CD8-positive, alpha-beta memory T cell (primary cell): ENCODE measurements at regions of chr11 and their contacts with region 1.

Region 1: DNA sequence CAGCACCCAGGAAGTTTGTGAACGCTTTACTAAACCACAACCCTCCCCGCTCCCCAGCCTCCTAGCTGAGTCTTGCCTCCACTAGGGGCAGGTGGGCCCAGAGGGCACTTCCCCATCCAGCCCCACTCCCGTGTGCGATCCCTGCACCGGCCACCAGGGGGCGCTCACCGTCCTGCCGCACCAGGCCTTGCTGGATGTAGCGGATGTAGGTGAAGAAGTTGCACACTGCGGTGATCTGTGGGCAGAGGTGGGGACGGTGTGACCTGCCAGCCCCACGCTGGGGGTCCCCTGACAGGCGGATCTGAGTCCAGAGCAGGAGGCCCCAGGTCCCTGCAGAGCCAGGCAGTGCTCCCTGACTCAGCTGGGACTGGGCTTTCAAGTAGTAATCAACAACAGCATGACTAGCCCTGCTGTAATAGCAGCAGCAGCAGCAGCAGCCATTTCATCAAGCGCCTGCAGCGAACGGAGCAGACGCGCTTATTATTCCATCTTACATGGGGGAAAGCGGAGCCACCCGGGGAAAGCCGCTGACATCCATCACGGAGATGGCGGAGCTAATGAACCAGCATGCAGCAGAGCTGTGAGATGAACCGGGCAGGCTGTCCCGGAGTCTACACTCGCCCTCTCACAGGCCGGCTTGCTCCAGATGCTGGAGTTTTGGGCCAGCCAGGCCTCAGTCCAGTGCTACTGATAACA is 7.9 kb upstream of the FADS3 start:
- DNase-seq: peak; percentile 86 to 93 (median 87)
- H3K4me3 ChIP-seq: no peak overlapping the region
- H3K4me3 Mint-ChIP-seq: peak overlapping the region in 1 of 7 donors; percentile 5
- H3K27ac ChIP-seq: no peak overlapping the region
- H3K27ac Mint-ChIP-seq: peak overlapping the region in 7 of 8 donors; percentile 3 to 98 (median 44)
- H3K4me1 ChIP-seq: no peaks in the 10 kb centered on the region
- H3K4me1 Mint-ChIP-seq: peaks cover 5 to 11% (median 6%) of the 10 kb centered on the region in 3 donors
- H3K27me3 ChIP-seq: no peaks in the 10 kb centered on the region
- H3K27me3 Mint-ChIP-seq: peaks cover 0 to 4% of the 10 kb centered on the region in 2 donors

Region 2: GRCh38 chr11:61752117-61752924 is 147.0 kb before region 1 on chr11 and contains the start of gene MYRF:
- CTCF ChIA-PET with region 1: no interaction called
- POLR2A ChIA-PET with region 1: no interaction called
- DNase-seq: peak; percentile 38 to 57 (median 50)
- H3K4me3 ChIP-seq: peak within 1 kb of the TSS; percentile 12
- H3K4me3 Mint-ChIP-seq: peak within 1 kb of the TSS; percentile 69 to 90 (median 80)
- H3K27ac ChIP-seq: peak within 1 kb of the TSS; percentile 51
- H3K27ac Mint-ChIP-seq: peak within 1 kb of the TSS in 5 of 8 donors; percentile 55 to 81 (median 73)
- H3K4me1 ChIP-seq: peaks cover 5% of the 10 kb centered on the region
- H3K4me1 Mint-ChIP-seq: peaks cover 17 to 33% (median 25%) of the 10 kb centered on the region in 3 donors
- H3K27me3 ChIP-seq: peaks cover 13% of the 10 kb centered on the region
- H3K27me3 Mint-ChIP-seq: peaks cover 16 to 38% of the 10 kb centered on the region in 2 donors
- total RNA-seq, gene MYRF: 0.70 to 0.93 TPM

Region 3: DNA sequence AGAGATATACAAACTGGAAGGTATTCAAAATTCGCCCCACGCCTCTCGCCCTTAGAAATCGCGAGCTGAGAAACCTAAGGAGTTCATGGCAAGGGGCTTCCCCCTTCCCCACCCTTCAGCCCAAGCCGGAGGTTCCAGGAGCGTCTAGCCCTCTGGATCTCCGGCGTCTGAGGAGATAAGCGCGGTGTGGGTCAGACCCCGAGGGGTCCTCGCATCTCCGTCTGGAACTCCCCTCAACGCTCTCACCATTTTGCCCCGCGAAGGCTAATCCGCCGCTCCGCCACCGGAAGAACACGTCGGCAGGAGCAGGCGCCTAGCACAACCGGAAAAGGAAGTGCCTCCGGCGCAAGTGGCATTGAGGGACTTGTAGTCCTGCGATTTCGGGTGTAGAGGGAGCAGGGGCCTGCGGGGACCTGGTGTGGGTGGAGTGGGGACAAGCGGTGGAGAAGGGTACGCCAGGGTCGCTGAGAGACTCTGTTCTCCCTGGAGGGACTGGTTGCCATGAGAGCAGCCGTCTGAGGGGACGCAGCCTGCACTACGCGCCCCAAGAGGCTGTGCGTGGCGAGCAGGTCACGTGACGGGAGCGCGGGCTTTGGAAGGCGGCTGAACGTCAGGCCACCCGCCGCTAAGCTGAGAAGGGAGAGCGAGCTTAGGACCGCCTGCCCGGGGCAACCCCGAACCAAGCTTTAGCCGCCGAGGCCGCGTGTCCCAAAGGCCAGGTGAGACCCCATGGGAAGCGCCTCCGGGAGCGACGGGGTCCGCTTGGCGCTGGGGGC is 106.8 kb before region 1 on chr11 and contains the starts of genes FEN1 and TMEM258:
- CTCF ChIA-PET with region 1: interaction called, 32 read pairs
- POLR2A ChIA-PET with region 1: no interaction called
- DNase-seq: peak; percentile 80 to 91 (median 85)
- H3K4me3 ChIP-seq: peak within 1 kb of the TSS; percentile 92
- H3K4me3 Mint-ChIP-seq: peak within 1 kb of the TSS; percentile 91 to 100 (median 92)
- H3K27ac ChIP-seq: peak within 1 kb of the TSS; percentile 94
- H3K27ac Mint-ChIP-seq: peak within 1 kb of the TSS; percentile 96 to 100 (median 99)
- H3K4me1 ChIP-seq: peaks cover 17% of the 10 kb centered on the region
- H3K4me1 Mint-ChIP-seq: peaks cover 24 to 49% (median 36%) of the 10 kb centered on the region in 3 donors
- H3K27me3 ChIP-seq: no peaks in the 10 kb centered on the region
- H3K27me3 Mint-ChIP-seq: no peaks in the 10 kb centered on the region
- total RNA-seq, gene FEN1: 112 to 121 TPM
- total RNA-seq, gene TMEM258: 148 to 152 TPM

Region 4: DNA sequence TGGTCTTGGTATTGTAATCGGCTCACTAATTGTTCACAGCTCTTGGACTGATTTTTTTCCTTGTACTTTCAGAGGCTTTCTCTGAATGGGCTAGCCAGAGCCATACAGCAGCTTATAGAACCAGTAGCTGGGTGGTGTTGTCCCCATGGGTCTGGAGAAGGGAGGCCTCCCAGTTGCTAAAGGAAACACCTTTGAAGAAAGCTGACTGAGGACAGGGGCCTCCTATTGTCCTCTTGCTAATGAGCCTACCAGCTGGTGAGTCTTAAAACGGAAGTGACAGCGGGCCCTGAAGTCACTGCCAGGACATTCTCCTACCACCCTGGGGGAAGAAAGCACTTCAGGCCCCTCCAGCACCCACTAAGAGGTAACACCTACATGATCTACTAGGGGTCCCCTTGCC is 17.9 kb before region 1 on chr11:
- CTCF ChIA-PET with region 1: interaction called, 13 read pairs
- POLR2A ChIA-PET with region 1: no interaction called
- DNase-seq: no peak
- H3K4me3 ChIP-seq: no peak overlapping the region
- H3K4me3 Mint-ChIP-seq: no peak overlapping the region
- H3K27ac ChIP-seq: no peak overlapping the region
- H3K27ac Mint-ChIP-seq: peak overlapping the region in 2 of 8 donors; percentile 7 to 38
- H3K4me1 ChIP-seq: no peaks in the 10 kb centered on the region
- H3K4me1 Mint-ChIP-seq: no peaks in the 10 kb centered on the region
- H3K27me3 ChIP-seq: no peaks in the 10 kb centered on the region
- H3K27me3 Mint-ChIP-seq: no peaks in the 10 kb centered on the region

Region 5: DNA sequence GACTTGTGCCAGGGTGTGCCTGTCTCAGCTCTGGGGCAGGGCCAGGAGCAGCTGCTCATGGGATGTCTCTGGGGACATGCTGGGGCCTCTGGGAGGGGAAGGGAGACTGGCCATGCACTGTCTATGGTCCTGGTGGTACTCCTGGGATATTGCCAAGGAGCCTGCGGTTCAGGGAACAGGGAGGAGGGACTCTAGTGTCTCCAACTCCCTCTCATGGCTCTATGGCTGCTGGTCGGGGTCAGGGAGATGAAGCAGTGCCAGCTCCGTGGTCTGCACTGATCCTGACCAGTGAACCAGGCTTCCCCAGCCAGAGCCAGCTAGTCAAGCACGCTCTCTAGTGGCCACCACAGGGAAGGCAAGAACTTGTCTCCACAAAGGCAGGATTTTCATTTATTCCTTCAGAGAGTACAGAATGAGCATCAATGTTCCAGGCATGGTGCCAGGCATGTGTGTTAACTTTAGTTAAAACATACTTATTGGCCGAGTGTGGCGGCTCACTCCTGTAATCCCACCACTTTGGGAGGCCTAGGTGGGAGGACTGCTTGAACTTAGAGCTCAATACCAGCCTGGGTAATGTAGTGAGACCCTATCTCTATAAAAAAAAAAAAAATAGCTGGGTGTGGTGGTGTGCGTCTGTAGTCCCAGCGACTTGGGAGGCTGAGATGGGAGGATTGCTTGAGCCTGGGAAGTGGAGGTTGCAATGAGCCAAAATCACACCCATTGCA is 48.4 kb after region 1 on chr11:
- CTCF ChIA-PET with region 1: interaction called, 17 read pairs
- POLR2A ChIA-PET with region 1: no interaction called
- DNase-seq: peak; percentile 44 to 71 (median 46)
- H3K4me3 ChIP-seq: no peak overlapping the region
- H3K4me3 Mint-ChIP-seq: no peak overlapping the region
- H3K27ac ChIP-seq: no peak overlapping the region
- H3K27ac Mint-ChIP-seq: peak overlapping the region in 1 of 8 donors; percentile 38
- H3K4me1 ChIP-seq: no peaks in the 10 kb centered on the region
- H3K4me1 Mint-ChIP-seq: no peaks in the 10 kb centered on the region
- H3K27me3 ChIP-seq: no peaks in the 10 kb centered on the region
- H3K27me3 Mint-ChIP-seq: peaks cover 4 to 14% of the 10 kb centered on the region in 2 donors

Region 6: DNA sequence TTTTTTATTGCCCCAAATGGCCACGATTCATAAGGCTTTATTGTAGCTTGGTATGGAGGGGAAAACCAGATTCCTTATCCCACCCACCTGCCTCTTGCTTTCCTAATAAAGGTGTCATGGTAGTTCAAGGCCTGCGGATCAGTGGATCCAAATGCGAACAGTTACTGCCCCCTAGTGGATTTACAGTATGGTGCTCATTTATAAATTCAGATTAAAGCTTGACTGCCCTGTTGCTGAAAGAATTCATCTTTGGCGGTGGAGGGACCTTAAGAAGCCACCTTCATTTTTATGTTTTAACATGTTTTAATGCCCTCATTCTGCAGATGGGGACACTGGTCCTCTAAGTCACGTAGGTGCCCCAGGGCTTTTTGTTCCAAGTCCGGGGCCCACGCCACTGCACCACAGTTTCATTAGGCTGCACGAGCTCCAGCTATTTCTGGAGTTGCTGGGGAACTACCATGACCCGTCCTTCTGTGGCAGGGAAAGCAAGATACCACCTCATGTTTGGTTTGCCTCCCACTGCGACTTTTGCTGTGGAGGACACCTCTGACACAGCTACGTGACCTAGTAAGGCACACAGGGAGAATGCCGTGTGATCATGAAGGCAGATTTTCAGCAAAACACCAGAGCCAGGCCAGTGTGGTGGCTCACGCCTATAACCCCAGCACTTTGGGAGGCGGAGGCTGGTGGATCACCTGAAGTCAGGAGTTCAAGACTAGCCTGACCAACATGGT is 208.9 kb after region 1 on chr11:
- CTCF ChIA-PET with region 1: interaction called, 91 read pairs
- POLR2A ChIA-PET with region 1: no interaction called
- DNase-seq: peak in 3 of 5 donors; percentile 21 to 69 (median 52)
- H3K4me3 ChIP-seq: no peak overlapping the region
- H3K4me3 Mint-ChIP-seq: peak overlapping the region in 1 of 7 donors; percentile 9
- H3K27ac ChIP-seq: no peak overlapping the region
- H3K27ac Mint-ChIP-seq: no peak overlapping the region
- H3K4me1 ChIP-seq: peaks cover 14% of the 10 kb centered on the region
- H3K4me1 Mint-ChIP-seq: peaks cover 12 to 16% (median 16%) of the 10 kb centered on the region in 3 donors
- H3K27me3 ChIP-seq: no peaks in the 10 kb centered on the region
- H3K27me3 Mint-ChIP-seq: peaks cover 2 to 5% of the 10 kb centered on the region in 2 donors